H1 (cell line): ENCODE measurements at regions of chr11 and their contacts with region 1.

Region 1: DNA sequence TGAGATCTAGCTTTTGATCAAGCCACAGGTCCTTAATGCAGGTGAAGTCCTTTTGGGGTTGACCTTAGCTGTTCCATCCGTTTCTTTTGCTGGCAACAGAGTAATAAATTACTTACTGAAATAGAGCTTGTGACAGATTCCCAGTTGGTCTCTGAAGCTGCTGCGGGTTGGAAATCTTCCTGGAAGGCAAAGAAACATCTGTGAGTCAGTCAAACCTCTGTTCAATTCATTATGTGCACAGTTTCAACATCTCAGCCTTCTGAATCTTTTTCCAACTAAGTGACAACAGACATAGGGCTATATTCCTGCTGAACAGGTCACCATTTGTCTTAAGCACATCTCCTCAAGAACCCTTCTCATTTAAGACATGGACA is 88.9 kb upstream of the DDI1 start:
- DNase-seq: no peak
- H3K4me3 ChIP-seq: no peak overlapping the region
- H3K27ac ChIP-seq: no peak overlapping the region
- H3K4me1 ChIP-seq: no peaks in the 10 kb centered on the region
- H3K27me3 ChIP-seq: no peaks in the 10 kb centered on the region
- CTCF ChIP-seq: no peak
- EP300 ChIP-seq: no peak
- POLR2A ChIP-seq: no peak
- RAD21 ChIP-seq: no peak

Region 2: GRCh38 chr11:103964390-103964789 is 16.9 kb after region 1 on chr11:
- CTCF ChIA-PET with region 1: interaction called, 11 read pairs
- POLR2A ChIA-PET with region 1: interaction called, 3 read pairs
- DNase-seq: no peak
- H3K4me3 ChIP-seq: no peak overlapping the region
- H3K27ac ChIP-seq: no peak overlapping the region
- H3K4me1 ChIP-seq: peaks cover 0 to 2% (median 0%) of the 10 kb centered on the region in 4 experiments; a peak in 1 of 7 replicates
- H3K27me3 ChIP-seq: no peaks in the 10 kb centered on the region
- CTCF ChIP-seq: no peak
- EP300 ChIP-seq: no peak
- POLR2A ChIP-seq: no peak
- RAD21 ChIP-seq: no peak